CD4-positive, alpha-beta memory T cell (primary cell): ENCODE measurements at regions of chr11 and their contacts with region 1.

Region 1: DNA sequence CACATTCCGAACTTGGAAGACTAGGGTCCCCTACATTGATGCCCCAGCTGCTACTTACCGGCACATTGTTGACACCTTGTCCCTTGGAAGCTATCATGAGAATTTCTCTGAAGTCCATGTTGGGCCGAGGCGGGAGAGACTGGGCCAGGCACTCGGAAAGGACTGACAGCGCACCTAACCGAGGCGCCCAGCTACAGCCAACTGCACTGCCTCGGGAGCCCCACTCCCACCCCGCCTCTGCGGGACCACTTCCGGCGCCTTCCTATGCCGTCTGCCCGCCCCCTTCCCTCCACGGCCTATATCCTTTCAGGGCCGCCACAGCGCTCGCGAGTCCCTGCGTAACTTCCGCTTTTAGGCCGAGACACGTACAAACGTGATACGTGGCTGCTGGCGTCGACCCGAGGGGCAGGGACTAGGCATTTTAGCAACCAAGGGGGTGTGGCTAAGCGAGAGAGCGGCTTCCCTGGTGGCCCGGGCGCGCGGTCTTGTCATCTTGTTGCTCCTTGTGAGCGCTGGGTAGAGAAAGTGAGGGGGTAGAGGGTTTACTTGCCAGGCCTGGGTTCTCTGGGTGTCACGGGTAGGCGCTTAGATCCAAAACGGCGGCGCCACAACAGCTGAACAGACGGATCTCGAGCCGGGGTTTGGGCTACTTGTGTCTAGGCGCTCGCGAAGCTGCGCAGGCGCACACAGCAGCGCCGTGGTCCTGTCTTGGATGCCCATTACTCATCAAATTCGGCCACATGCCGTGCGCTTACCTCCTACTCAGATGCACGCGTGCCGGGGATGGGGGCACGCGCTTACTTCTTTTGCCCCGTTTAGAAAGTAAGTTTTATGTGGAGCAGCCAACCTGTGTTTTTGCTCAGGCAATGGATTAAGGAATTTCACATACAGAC is at the start of gene SPTY2D1:
- DNase-seq: peak; percentile 96 to 100 (median 98)
- H3K4me3 ChIP-seq: peak within 1 kb of the TSS; percentile 91 to 99
- H3K4me3 Mint-ChIP-seq: peak within 1 kb of the TSS; percentile 92 to 99 (median 98)
- H3K27ac ChIP-seq: peak within 1 kb of the TSS; percentile 93
- H3K27ac Mint-ChIP-seq: peak within 1 kb of the TSS; percentile 97 to 100 (median 99)
- H3K4me1 ChIP-seq: peaks cover 21% of the 10 kb centered on the region
- H3K4me1 Mint-ChIP-seq: peaks cover 21 to 48% (median 31%) of the 10 kb centered on the region in 4 donors
- H3K27me3 ChIP-seq: no peaks in the 10 kb centered on the region
- H3K27me3 Mint-ChIP-seq: no peaks in the 10 kb centered on the region
- total RNA-seq, gene SPTY2D1: 23.0 to 25.2 TPM

Region 2: GRCh38 chr11:18395735-18396504 is 238.5 kb before region 1 on chr11:
- CTCF ChIA-PET with region 1: interaction called, 3 read pairs
- POLR2A ChIA-PET with region 1: interaction called, 24 read pairs
- intact Hi-C with region 1: loop called (anchors 1 kb)
- DNase-seq: peak; percentile 94 to 98 (median 97)
- H3K4me3 ChIP-seq: peak overlapping the region; percentile 72 to 98
- H3K4me3 Mint-ChIP-seq: peak overlapping the region; percentile 98 to 99 (median 98)
- H3K27ac ChIP-seq: peak overlapping the region; percentile 88
- H3K27ac Mint-ChIP-seq: peak overlapping the region; percentile 97 to 99 (median 98)
- H3K4me1 ChIP-seq: peaks cover 43% of the 10 kb centered on the region
- H3K4me1 Mint-ChIP-seq: peaks cover 17 to 71% (median 29%) of the 10 kb centered on the region in 4 donors
- H3K27me3 ChIP-seq: no peaks in the 10 kb centered on the region
- H3K27me3 Mint-ChIP-seq: peaks cover 0 to 2% of the 10 kb centered on the region in 2 donors

Region 3: DNA sequence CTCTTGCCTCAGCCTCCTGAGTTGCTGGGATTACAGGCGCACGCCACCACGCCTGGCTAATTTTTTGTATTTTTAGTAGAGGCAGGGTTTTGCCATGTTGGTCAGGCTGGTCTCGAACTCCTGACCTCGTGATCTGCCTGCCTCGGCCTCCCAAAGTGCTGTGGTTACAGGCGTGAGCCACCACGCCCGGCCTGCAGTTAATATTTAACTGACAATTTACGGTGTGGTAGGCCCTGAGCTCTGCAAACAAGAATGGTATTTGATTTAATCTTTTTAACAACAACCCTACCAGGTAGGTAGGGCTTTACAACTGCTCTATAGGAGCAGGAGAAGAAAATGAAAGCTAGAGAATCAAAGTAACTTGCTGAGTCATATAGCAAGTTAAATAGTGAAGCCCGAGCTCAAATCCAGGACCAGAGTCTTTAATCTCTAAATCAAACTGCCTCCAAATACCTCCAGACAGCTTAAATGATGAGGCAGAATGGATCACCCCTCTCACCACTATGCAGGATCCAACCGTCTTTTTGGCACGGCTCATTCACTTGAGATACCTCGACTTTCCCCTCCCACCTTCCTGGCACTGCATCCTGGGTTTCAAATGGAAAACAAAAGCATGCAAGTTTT is 55.3 kb before region 1 on chr11:
- CTCF ChIA-PET with region 1: interaction called, 5 read pairs
- POLR2A ChIA-PET with region 1: interaction called, 10 read pairs
- intact Hi-C with region 1: no loop called
- DNase-seq: peak in 3 of 5 donors; percentile 22 to 54 (median 27)
- H3K4me3 ChIP-seq: peak overlapping the region in 1 of 2 donors; percentile 33
- H3K4me3 Mint-ChIP-seq: peak overlapping the region; percentile 66 to 88 (median 81)
- H3K27ac ChIP-seq: no peak overlapping the region
- H3K27ac Mint-ChIP-seq: peak overlapping the region; percentile 82 to 94 (median 89)
- H3K4me1 ChIP-seq: peaks cover 23% of the 10 kb centered on the region
- H3K4me1 Mint-ChIP-seq: peaks cover 17 to 38% (median 25%) of the 10 kb centered on the region in 4 donors
- H3K27me3 ChIP-seq: no peaks in the 10 kb centered on the region
- H3K27me3 Mint-ChIP-seq: no peaks in the 10 kb centered on the region

Region 4: DNA sequence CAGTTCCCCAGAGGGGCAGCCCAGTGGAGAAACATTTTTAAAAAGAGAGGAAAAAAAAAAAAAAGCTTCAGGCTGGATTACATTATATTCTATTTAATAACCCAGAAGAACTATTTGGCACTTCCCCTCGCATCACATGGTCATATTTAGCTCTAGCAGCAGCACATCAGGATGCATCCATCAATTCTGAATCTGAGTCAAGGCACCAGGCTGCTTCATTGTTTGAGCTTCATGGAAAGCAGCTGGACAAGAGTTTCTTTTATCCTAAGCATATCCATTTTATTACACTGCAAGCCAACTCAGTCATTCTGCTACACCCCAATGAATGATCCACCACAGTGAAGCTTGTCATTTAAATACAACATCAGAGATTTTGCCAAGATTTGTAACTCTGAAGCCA is 10.2 kb before region 1 on chr11:
- CTCF ChIA-PET with region 1: interaction called, 32 read pairs
- POLR2A ChIA-PET with region 1: interaction called, 46 read pairs
- intact Hi-C with region 1: no loop called
- DNase-seq: no peak
- H3K4me3 ChIP-seq: no peak overlapping the region
- H3K4me3 Mint-ChIP-seq: no peak overlapping the region
- H3K27ac ChIP-seq: no peak overlapping the region
- H3K27ac Mint-ChIP-seq: peak overlapping the region in 2 of 7 donors; percentile 47 to 52
- H3K4me1 ChIP-seq: peaks cover 43% of the 10 kb centered on the region
- H3K4me1 Mint-ChIP-seq: peaks cover 34 to 76% (median 52%) of the 10 kb centered on the region in 4 donors
- H3K27me3 ChIP-seq: no peaks in the 10 kb centered on the region
- H3K27me3 Mint-ChIP-seq: no peaks in the 10 kb centered on the region

Region 5: DNA sequence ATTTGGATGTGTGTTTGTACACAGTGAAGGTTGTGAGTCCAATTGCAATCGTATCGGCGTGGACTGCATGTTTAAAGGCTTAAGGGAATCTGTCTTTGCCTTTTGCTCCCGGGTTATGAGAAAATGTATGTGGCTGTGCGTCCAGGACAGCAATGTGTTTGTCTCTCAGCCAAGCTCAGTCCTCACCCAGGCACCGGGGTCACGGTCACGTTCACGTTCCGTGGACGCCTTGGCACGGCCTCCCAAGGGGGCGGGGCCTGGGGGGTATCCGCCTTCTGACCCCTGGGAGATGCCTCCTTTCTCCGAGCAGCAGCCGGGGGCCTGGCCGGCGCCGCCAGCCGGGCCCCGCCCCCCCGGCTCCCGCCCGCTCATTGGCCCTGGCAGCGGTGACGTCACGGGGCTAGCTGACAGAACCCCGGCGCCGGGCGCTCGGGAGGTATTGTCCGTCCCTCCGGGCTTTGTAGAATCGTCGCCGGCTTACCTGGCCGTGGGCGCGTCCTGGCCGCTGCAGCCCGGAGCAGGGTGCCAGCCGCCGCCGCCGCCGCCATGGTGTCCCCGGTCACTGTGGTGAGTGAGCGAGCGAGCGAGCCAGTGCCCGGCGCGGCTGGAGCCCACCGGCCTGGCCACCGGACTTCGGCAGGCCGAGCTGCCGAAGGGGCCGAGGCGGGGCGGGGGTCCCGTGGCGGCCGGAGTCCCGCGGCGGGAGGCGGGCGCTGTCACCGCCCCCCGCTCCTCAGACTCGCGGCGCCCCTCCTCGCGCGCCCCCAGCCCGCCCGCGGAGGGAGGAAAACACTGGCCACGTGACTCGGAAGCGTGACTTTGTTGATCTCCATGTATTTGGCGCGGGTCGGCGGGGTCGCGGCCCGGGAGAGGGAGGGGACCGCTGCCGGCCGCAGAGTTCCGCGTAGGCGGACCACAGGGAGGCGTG is 64.2 kb after region 1 on chr11 and contains the start of gene TMEM86A:
- CTCF ChIA-PET with region 1: no interaction called
- POLR2A ChIA-PET with region 1: interaction called, 14 read pairs
- intact Hi-C with region 1: loop called (anchors 2 kb)
- DNase-seq: peak; percentile 87 to 91 (median 88)
- H3K4me3 ChIP-seq: peak within 1 kb of the TSS in 1 of 2 donors; percentile 64
- H3K4me3 Mint-ChIP-seq: peak within 1 kb of the TSS; percentile 79 to 88 (median 84)
- H3K27ac ChIP-seq: peak within 1 kb of the TSS; percentile 63
- H3K27ac Mint-ChIP-seq: peak within 1 kb of the TSS; percentile 64 to 95 (median 92)
- H3K4me1 ChIP-seq: peaks cover 15% of the 10 kb centered on the region
- H3K4me1 Mint-ChIP-seq: peaks cover 12 to 22% (median 17%) of the 10 kb centered on the region in 4 donors
- H3K27me3 ChIP-seq: no peaks in the 10 kb centered on the region
- H3K27me3 Mint-ChIP-seq: no peaks in the 10 kb centered on the region
- total RNA-seq, gene TMEM86A: 2.5 to 4.0 TPM